ENCODE measurements at regions of chr4 and their contacts with region 1.

Region 1: GRCh38 chr4:39697740-39698423 is at the start of gene UBE2K:
- DNase-seq: peak; percentile 92
- H3K4me3 Mint-ChIP-seq: peak within 1 kb of the TSS; percentile 96
- H3K27ac Mint-ChIP-seq: peak within 1 kb of the TSS; percentile 96
- H3K4me1 Mint-ChIP-seq: peaks cover 36% of the 10 kb centered on the region
- H3K27me3 Mint-ChIP-seq: no peaks in the 10 kb centered on the region
- total RNA-seq, gene UBE2K: 81.4 to 83.5 TPM

Region 2: GRCh38 chr4:39527273-39528060 is 170.4 kb before region 1 on chr4 and contains the start of gene UGDH:
- CTCF ChIA-PET with region 1: interaction called, 3 read pairs
- POLR2A ChIA-PET with region 1: interaction called, 12 read pairs
- intact Hi-C with region 1: loop called (anchors 1 kb)
- DNase-seq: peak; percentile 94
- H3K4me3 Mint-ChIP-seq: peak within 1 kb of the TSS; percentile 99
- H3K27ac Mint-ChIP-seq: peak within 1 kb of the TSS; percentile 90
- H3K4me1 Mint-ChIP-seq: peaks cover 18% of the 10 kb centered on the region
- H3K27me3 Mint-ChIP-seq: no peaks in the 10 kb centered on the region
- total RNA-seq, gene UGDH: 28.7 to 32.9 TPM

Region 3: GRCh38 chr4:39718366-39719323 is 20.8 kb after region 1 on chr4:
- CTCF ChIA-PET with region 1: no interaction called
- POLR2A ChIA-PET with region 1: no interaction called
- intact Hi-C with region 1: loop called (anchors 1 kb)
- DNase-seq: peak; percentile 43
- H3K4me3 Mint-ChIP-seq: no peak overlapping the region
- H3K27ac Mint-ChIP-seq: peak overlapping the region; percentile 59
- H3K4me1 Mint-ChIP-seq: peaks cover 47% of the 10 kb centered on the region
- H3K27me3 Mint-ChIP-seq: no peaks in the 10 kb centered on the region

Measured in activated CD4-positive, alpha-beta memory T cell treated with anti-CD3 and anti-CD28 coated beads for 36 hours (primary cell).